ENCODE measurements at regions of chr2 and their contacts with region 1.

Region 1: DNA sequence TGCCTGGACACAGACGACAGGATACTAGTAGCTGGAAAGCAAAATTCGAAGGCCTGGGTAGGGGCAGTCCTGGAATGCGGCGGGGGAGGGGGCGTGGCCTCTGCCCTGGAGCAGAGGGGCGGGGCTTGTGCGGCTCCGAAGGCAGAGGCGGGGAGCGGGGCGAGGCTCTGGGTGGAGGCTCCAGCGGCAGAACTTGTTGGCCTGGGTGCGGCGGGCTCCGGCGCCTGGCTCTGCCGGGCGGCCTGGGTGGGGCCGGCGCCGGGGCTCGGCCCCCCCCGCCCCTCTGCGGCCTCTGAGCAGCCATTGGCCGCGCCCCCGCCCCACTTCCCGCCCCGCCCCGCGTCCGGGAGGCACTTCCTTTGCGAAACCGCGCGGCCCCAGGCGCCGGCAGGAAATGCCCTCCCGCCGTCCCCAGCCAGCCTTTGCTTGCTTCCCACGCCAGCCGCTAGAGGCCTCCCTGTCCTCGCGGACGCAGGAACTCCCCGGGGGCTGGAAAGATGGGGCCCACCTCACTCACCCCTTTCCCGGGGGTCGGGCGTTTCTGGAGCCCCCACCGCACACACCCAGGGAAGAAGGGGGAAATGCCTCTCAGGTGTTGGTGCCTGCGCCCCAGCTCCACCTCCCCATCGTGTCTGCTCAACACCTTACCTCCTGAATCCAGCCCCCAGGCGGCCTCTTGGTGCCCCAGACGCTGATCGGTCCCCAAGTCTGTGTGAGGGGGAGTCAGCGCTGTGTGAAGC is 6.7 kb downstream of the CTDSP1 start:
- DNase-seq: peak; percentile 64
- ATAC-seq: peak; percentile 93
- H3K4me3 ChIP-seq: peak overlapping the region; percentile 73
- H3K27ac ChIP-seq: peak overlapping the region; percentile 33
- H3K4me1 ChIP-seq: peaks cover 31% of the 10 kb centered on the region
- H3K27me3 ChIP-seq: no peaks in the 10 kb centered on the region
- CTCF ChIP-seq: peak; percentile 70 to 91 (median 84)
- EP300 ChIP-seq: no peak
- POLR2A ChIP-seq: peak; percentile 51
- RAD21 ChIP-seq: peak; percentile 87

Region 2: DNA sequence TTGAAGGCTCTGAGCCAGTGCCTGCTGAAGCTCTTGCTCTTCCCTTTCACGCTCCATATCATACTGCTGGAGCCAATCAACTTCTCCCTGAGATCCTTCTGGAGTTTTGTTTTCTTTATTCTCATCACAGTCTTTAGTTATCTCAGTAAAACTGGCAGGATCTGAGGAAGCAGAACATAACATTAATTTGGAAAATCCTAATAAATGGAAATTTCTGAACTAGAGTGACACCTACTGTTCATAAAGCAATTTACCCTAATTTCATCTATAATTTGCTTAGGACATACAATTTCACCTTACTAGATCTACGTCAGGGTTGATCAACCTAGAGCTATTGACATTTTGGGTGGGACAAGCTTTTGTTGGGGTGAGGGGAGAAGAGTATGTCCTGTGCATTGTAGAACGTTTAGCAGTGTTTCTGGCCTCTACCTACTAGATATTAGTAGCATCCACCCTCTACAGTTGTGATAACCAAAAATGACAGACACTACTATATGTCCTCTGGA is 59.7 kb after region 1 on chr2:
- CTCF ChIA-PET with region 1: interaction called, 8 read pairs
- POLR2A ChIA-PET with region 1: no interaction called
- RAD21 ChIA-PET with region 1: interaction called, 3 read pairs
- SMC1A ChIA-PET with region 1: interaction called, 4 read pairs
- in situ Hi-C with region 1: no loop called
- intact Hi-C with region 1: loop called (anchors 1 kb)
- DNase-seq: no peak
- ATAC-seq: peak; percentile 41; the same call in 1 of the 3 replicates
- H3K4me3 ChIP-seq: no peak overlapping the region
- H3K27ac ChIP-seq: no peak overlapping the region
- H3K4me1 ChIP-seq: no peaks in the 10 kb centered on the region
- H3K27me3 ChIP-seq: no peaks in the 10 kb centered on the region
- CTCF ChIP-seq: peak; percentile 14 to 42 (median 38); a peak in 3 of 6 replicates
- EP300 ChIP-seq: no peak
- POLR2A ChIP-seq: no peak
- RAD21 ChIP-seq: no peak

Region 3: GRCh38 chr2:218648088-218648786 is 241.9 kb after region 1 on chr2:
- CTCF ChIA-PET with region 1: interaction called, 22 read pairs
- POLR2A ChIA-PET with region 1: no interaction called
- RAD21 ChIA-PET with region 1: interaction called, 3 read pairs
- SMC1A ChIA-PET with region 1: no interaction called
- in situ Hi-C with region 1: loop called (anchors 5 kb)
- intact Hi-C with region 1: loop called (anchors 1 kb)
- DNase-seq: no peak
- ATAC-seq: peak; percentile 96
- H3K4me3 ChIP-seq: no peak overlapping the region
- H3K27ac ChIP-seq: no peak overlapping the region
- H3K4me1 ChIP-seq: no peaks in the 10 kb centered on the region
- H3K27me3 ChIP-seq: no peaks in the 10 kb centered on the region
- CTCF ChIP-seq: peak; percentile 83 to 97 (median 91)
- EP300 ChIP-seq: no peak
- POLR2A ChIP-seq: no peak
- RAD21 ChIP-seq: peak; percentile 80

Measured in GM12878 (cell line).